ENCODE measurements at regions of chr12 and their contacts with region 1.

Region 1: GRCh38 chr12:82980616-82981015 is 293.9 kb downstream of the TMTC2 start:
- DNase-seq: no peak
- H3K4me3 Mint-ChIP-seq: no peak overlapping the region
- H3K27ac Mint-ChIP-seq: no peak overlapping the region
- H3K4me1 Mint-ChIP-seq: no peaks in the 10 kb centered on the region
- H3K27me3 Mint-ChIP-seq: no peaks in the 10 kb centered on the region

Region 2: DNA sequence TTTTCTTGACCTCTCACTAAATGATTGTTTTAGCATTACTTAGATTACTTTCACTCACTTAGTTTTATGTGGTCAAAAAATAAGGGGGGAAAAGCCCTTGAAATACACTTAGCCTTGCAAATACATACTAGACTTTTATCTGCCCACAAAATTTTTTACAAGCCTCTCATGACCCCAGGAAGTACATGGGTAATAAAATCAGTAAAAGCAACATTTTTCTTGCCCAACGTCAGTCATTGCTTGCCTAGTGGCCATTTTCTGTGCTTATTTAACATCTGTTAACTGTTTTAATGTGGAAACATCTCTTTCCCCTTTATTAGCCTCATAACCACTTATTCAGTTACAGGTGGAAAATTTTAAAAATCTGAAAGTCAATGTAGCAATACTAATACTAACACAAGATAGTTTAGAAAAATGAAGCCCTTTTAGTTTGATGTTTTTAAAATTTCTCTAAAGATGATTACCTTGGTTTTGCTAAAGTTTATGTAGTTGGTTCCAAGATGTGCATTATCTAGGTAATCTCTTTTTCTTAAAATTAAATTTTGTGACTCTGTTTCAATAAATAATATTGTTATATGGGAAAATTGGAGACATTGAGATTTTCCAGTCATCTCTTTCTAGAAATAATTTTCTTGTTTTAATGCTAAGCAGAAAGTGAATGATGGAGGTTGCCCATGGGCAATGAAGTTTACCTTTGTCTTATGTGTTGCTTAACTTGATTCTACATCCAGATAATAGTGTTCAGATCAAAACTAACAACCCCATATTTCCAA is 118.4 kb before region 1 on chr12:
- intact Hi-C with region 1: no loop called
- DNase-seq: no peak
- H3K4me3 Mint-ChIP-seq: no peak overlapping the region
- H3K27ac Mint-ChIP-seq: no peak overlapping the region
- H3K4me1 Mint-ChIP-seq: no peaks in the 10 kb centered on the region
- H3K27me3 Mint-ChIP-seq: no peaks in the 10 kb centered on the region

Region 3: GRCh38 chr12:82963956-82964355 is 16.7 kb before region 1 on chr12:
- intact Hi-C with region 1: loop called (anchors 1 kb)
- DNase-seq: no peak
- H3K4me3 Mint-ChIP-seq: no peak overlapping the region
- H3K27ac Mint-ChIP-seq: no peak overlapping the region
- H3K4me1 Mint-ChIP-seq: peaks cover 7% of the 10 kb centered on the region
- H3K27me3 Mint-ChIP-seq: peaks cover 2% of the 10 kb centered on the region

Measured in activated T-helper 2 cell treated with anti-CD3 and anti-CD28 coated beads, Interferon-gamma antibody, Interleukin-2, Interleukin-4, amounts not matched to agents 10 μg/mL and 5 μg/mL and 100 μg/mL, durations not matched to agents 14 hours and 24 hours and 36 hours (primary cell).